Esophagus squamous epithelium (tissue), 5 donors: ENCODE measurements at regions of chr4 and their contacts with region 1.

Region 1: DNA sequence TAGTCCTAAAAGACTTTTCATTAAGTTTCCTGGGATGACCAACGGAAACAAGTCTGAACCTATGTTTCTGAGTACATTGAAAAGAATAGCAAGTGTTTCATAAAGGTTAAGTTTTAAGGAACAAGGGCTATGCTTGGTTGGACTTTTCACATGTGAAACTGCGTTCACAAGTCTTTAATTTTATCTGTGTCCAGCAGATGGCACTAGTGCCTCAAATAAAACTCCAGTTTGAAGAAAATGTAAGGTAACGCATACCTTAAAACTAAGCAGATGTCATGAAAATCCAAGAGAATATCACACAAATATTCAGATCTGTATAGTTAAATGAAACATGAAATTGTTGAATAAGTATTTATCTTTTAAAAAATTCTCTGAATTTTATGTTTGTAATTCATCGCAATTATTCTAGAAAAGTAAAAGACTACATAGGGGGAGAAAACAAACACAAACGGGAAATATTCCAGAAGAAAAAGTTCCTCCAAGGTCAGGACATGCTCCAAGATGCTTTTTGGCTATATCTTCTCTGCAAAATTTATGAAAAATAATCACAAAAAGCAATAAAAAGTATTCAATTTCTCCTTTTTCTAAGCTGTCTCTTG is 89.6 kb upstream of the MAD2L1 start:
- DNase-seq: no peak
- H3K4me3 ChIP-seq: no peak overlapping the region
- H3K27ac ChIP-seq: no peak overlapping the region
- H3K4me1 ChIP-seq: no peaks in the 10 kb centered on the region
- H3K27me3 ChIP-seq: no peaks in the 10 kb centered on the region
- CTCF ChIP-seq: peak in 5 of 6 experiments; percentile 35 to 71 (median 60)
- POLR2A ChIP-seq: no peak

Region 2: GRCh38 chr4:120355881-120356280 is 199.7 kb after region 1 on chr4:
- intact Hi-C with region 1: no loop called
- DNase-seq: no peak
- H3K4me3 ChIP-seq: no peak overlapping the region
- H3K27ac ChIP-seq: no peak overlapping the region
- H3K4me1 ChIP-seq: no peaks in the 10 kb centered on the region
- H3K27me3 ChIP-seq: no peaks in the 10 kb centered on the region
- CTCF ChIP-seq: no peak
- POLR2A ChIP-seq: no peak

Region 3: DNA sequence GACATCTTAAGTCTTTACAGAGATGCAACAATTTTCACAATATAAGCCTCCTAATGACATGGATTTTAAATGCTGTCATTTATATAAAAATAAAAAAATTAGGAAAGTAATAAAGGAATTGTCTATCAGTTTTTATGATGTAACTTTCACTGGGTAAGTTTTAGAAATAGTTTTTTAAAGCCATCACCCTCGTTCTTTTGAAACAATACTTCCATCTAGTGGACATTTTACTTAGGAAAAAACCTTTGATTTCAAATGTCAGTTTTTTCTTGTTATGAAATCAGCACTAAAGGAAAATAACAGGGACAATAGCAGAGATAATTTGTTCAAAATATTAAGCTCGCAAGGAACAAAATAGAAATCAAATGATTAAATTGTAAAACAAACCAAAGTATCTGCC is 940.4 kb after region 1 on chr4:
- intact Hi-C with region 1: loop called (anchors 10 kb)
- DNase-seq: no peak
- H3K4me3 ChIP-seq: no peak overlapping the region
- H3K27ac ChIP-seq: no peak overlapping the region
- H3K4me1 ChIP-seq: no peaks in the 10 kb centered on the region
- H3K27me3 ChIP-seq: no peaks in the 10 kb centered on the region
- CTCF ChIP-seq: peak in 5 of 6 experiments; percentile 22 to 58 (median 50)
- POLR2A ChIP-seq: no peak